ENCODE measurements at regions of chr10 and their contacts with region 1.

Region 1: GRCh38 chr10:88848499-88848898 is 3.1 kb downstream of the ANKRD22 start:
- DNase-seq: no peak
- H3K4me3 Mint-ChIP-seq: peak overlapping the region; percentile 0
- H3K27ac Mint-ChIP-seq: peak overlapping the region; percentile 45
- H3K4me1 Mint-ChIP-seq: peaks cover 28% of the 10 kb centered on the region
- H3K27me3 Mint-ChIP-seq: peaks cover 4% of the 10 kb centered on the region

Region 2: GRCh38 chr10:88165849-88166271 is 682.6 kb before region 1 on chr10:
- intact Hi-C with region 1: no loop called
- DNase-seq: no peak
- H3K4me3 Mint-ChIP-seq: no peak overlapping the region
- H3K27ac Mint-ChIP-seq: no peak overlapping the region
- H3K4me1 Mint-ChIP-seq: peaks cover 33% of the 10 kb centered on the region
- H3K27me3 Mint-ChIP-seq: peaks cover 2% of the 10 kb centered on the region

Region 3: DNA sequence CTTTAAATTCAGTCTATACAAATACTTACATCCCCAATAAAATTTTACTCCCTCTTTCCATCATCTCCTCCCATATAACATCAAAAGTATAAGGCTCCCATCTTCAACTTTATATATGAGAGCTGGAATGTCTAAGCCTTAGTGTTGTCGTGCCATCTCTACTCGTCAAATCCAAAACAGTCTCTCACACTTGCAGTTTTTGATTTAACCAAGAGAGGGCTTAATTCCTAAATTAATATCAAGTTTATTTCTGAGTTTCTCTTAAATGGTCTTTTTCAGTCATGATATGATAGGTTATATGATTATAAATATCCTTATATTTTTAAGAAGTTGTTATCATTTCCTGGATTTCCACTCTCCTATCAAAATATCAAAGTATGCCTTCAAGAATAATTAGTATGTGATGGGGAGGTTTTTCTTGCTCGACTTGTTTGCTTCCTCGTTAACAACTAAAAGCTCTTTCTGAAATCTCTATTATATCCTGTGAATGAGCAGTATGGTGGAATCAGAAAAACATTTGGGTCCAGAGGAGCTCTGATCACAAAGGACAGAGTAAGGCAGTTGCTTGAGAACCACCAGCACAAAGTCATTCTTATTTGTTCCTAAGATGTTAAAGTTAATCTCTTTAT is 155.0 kb before region 1 on chr10:
- intact Hi-C with region 1: no loop called
- DNase-seq: no peak
- H3K4me3 Mint-ChIP-seq: no peak overlapping the region
- H3K27ac Mint-ChIP-seq: no peak overlapping the region
- H3K4me1 Mint-ChIP-seq: no peaks in the 10 kb centered on the region
- H3K27me3 Mint-ChIP-seq: peaks cover 41% of the 10 kb centered on the region

Region 4: GRCh38 chr10:88759366-88760101 is 89.0 kb before region 1 on chr10 and contains the start of gene LIPN:
- intact Hi-C with region 1: loop called (anchors 1 kb)
- DNase-seq: no peak
- H3K4me3 Mint-ChIP-seq: no peak within 1 kb of the TSS
- H3K27ac Mint-ChIP-seq: no peak within 1 kb of the TSS
- H3K4me1 Mint-ChIP-seq: peaks cover 6% of the 10 kb centered on the region
- H3K27me3 Mint-ChIP-seq: peaks cover 20% of the 10 kb centered on the region
- total RNA-seq, gene LIPN: not detected in 2 replicates

Region 5: DNA sequence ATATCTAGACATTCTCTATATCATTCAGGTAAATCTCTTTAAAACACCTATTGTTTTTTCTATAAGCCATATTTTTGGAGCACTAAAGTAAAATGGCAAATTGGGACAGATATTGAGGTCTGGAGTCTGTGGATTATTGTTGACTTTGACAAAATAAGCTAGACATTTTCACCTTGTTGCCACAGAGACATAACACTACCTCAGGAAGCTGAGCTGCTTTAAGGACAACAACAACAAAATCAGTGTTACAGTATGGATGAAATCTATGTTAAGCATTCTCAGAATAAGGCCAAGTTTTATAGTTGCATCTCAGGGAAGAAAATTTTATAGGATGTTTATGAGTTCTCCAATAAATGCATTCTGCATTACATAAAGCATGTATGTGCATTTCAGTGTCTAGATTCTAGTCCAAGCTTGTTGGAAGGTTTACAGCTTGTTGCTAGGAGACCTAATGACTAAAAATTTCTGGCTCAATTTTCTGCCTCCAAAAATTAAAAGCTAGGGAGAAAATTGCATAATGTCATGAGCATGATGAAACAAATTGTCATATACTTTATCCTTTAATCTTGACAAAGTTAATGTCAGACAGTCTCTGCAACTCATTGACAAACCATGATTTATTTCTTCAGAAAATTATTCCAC is 27.6 kb before region 1 on chr10:
- intact Hi-C with region 1: loop called (anchors 1 kb)
- DNase-seq: no peak
- H3K4me3 Mint-ChIP-seq: no peak overlapping the region
- H3K27ac Mint-ChIP-seq: no peak overlapping the region
- H3K4me1 Mint-ChIP-seq: peaks cover 51% of the 10 kb centered on the region
- H3K27me3 Mint-ChIP-seq: peaks cover 7% of the 10 kb centered on the region

Region 6: DNA sequence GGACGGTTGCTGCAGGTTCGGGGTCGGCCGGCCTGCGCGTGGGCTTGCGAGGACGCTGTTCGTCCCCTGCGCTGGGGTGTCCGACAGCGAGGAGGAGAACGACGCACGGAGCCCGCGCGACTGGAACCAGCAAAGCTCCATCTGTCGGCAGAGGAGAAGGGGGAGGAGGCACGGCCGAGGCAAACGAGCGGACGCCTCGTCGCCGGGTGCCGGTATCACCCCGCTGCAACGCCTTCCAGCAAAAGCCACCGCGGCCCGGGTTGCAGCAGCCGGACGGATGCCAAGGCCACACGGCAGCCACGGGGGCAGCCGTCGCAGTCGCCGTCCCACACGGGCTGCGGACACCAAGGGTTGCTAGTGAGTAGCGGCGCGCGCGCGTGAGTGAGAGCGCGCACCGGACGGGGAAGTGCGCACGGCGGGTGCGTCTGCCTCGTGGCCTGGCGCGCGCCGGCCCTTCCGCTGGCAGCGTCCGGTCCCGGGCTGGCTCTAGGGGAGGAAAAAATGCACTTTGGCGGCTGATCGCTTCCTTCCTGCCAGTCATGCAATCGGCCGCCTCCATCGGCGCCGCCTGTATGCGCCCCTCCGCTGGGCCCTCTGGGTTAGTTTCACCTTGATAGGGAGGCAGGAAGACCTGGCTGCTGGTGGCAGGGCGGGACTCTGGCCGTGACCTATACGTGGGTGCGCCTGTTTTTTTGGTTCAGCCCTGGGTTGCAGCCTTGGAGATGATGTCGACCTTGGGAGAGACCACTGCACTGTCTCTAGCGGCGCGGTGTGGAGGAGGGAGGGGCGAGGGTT is 32.0 kb after region 1 on chr10:
- intact Hi-C with region 1: loop called (anchors 1 kb)
- DNase-seq: peak; percentile 68
- H3K4me3 Mint-ChIP-seq: peak overlapping the region; percentile 98
- H3K27ac Mint-ChIP-seq: peak overlapping the region; percentile 99
- H3K4me1 Mint-ChIP-seq: peaks cover 74% of the 10 kb centered on the region
- H3K27me3 Mint-ChIP-seq: no peaks in the 10 kb centered on the region

Measured in activated T-helper 1 cell treated with anti-CD3 and anti-CD28 coated beads, Interleukin-12 subunit alpha, Interleukin-12 subunit beta, Interleukin-2, Interleukin-4 antibody, amounts not matched to agents 30 ng/mL and 10 ng/mL and 1 ng/mL, durations not matched to agents 14 hours and 24 hours and 36 hours (primary cell).